Activated T-helper 1 cell treated with anti-CD3 and anti-CD28 coated beads, Interleukin-12 subunit alpha, Interleukin-12 subunit beta, Interleukin-2, Interleukin-4 antibody, amounts not matched to agents 30 ng/mL and 10 ng/mL and 1 ng/mL, durations not matched to agents 14 hours and 24 hours and 36 hours (primary cell): ENCODE measurements at regions of chr14 and their contacts with region 1.

Region 1: DNA sequence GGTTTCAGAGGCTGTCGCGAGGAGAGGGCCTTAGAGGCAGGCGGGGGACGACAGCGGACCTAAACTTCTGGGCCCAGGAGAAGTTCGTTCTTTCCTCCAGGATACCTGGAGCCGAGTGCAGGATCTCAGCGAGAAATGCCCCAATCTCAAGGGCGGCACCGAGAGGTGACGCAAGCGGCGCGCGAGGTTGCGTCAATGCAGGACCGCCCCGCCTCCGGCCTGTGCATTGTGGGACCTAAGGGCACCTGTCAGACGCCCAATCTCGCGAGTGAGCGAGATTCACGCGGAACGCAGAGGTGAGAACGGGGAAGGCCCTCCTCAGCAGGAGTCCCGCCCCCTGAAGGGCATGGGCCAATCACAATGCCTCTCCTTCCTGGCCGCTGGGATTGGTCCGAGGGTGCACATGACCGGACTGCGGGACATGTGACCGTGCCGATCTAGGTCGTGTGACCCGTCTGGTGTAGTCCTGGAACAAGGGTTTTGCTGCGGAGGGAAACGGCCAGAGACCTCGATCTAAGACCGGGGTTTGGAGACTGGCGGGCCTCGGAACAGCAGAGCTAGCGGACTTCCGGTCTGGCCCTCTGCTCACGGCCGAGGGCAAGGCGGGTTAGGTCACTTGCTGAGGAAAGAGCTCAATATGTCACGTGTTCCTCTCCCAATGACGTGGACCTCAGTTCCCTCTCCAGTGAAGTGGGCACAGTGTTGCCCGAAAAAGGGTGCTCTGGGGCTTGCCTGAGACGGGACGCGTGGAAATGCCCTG is 16.3 kb upstream of the DYNC1H1 start:
- DNase-seq: peak; percentile 100
- H3K4me3 Mint-ChIP-seq: peak overlapping the region; percentile 97
- H3K27ac Mint-ChIP-seq: peak overlapping the region; percentile 97
- H3K4me1 Mint-ChIP-seq: peaks cover 12% of the 10 kb centered on the region
- H3K27me3 Mint-ChIP-seq: peaks cover 15% of the 10 kb centered on the region

Region 2: GRCh38 chr14:101721951-101722661 is 226.0 kb before region 1 on chr14:
- intact Hi-C with region 1: loop called (anchors 1 kb)
- DNase-seq: peak; percentile 65
- H3K4me3 Mint-ChIP-seq: peak overlapping the region; percentile 77
- H3K27ac Mint-ChIP-seq: peak overlapping the region; percentile 94
- H3K4me1 Mint-ChIP-seq: peaks cover 46% of the 10 kb centered on the region
- H3K27me3 Mint-ChIP-seq: no peaks in the 10 kb centered on the region

Region 3: DNA sequence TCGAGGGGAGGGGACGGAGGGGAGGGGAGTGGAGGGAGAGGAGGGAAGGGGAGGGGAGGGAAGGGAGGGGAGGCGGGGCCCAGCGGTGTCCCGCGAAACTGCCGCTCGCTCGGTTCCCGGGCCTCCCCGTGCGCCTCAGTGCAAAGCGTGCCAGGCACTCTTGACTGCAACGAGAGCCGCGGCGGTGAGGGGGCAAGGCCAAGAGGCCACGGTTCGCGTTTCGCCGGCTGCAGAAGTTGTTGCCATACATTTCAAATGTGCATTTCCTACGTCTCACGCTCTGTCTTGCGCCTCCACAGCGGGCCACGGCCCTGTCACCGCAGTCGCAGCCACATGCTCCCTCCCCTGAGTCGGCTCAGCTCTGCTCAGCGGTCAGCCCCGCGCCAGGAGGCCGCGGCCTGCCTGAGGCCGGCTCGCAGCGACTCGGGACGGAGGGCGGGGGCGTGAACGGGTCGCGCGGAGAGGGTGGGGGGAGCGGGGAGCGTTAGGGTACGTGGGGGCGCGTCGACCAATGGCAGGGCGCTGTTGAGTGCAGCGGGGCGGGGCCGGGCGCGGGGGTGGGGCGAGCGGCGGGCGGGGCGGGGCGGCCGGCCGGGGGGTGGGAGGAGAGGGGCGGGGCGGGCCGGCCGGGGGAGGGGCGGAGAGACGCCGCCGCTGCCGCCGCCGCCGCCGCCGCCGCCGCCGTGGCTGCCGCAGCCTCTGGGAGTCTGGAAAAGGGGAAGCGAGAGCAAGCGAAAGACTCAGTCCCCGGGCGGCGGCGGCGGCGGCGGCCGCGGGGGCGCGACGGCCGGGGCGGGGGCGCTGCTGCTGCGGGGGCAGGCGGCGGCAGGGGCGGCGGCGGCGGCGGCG is 186.8 kb before region 1 on chr14 and contains the start of gene PPP2R5C:
- intact Hi-C with region 1: loop called (anchors 1 kb)
- DNase-seq: peak; percentile 72
- H3K4me3 Mint-ChIP-seq: peak within 1 kb of the TSS; percentile 90
- H3K27ac Mint-ChIP-seq: peak within 1 kb of the TSS; percentile 79
- H3K4me1 Mint-ChIP-seq: peaks cover 33% of the 10 kb centered on the region
- H3K27me3 Mint-ChIP-seq: peaks cover 3% of the 10 kb centered on the region
- total RNA-seq, gene PPP2R5C: 157 and 166 TPM in 2 replicates

Region 4: DNA sequence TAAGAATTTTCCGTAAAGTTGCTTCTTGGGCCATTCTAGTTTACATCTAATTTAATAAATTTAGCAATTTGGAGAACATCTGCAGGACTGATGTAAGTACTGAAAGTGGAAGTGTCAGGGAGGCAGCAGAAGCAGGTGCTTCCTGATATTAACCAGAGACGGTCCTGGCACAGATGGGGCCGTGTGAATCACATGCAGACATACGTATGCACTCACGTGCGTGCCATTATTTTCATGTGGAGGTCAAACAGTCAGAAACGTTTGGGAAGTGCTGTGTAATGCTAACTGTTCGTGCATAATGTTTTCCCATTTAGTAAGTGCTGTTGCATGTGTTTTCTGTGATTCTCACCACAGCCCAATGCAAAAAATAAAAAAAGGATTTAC is 71.5 kb before region 1 on chr14:
- intact Hi-C with region 1: loop called (anchors 2 kb)
- DNase-seq: peak; percentile 46
- H3K4me3 Mint-ChIP-seq: peak overlapping the region; percentile 65
- H3K27ac Mint-ChIP-seq: peak overlapping the region; percentile 81
- H3K4me1 Mint-ChIP-seq: peaks cover 80% of the 10 kb centered on the region
- H3K27me3 Mint-ChIP-seq: no peaks in the 10 kb centered on the region

Region 5: DNA sequence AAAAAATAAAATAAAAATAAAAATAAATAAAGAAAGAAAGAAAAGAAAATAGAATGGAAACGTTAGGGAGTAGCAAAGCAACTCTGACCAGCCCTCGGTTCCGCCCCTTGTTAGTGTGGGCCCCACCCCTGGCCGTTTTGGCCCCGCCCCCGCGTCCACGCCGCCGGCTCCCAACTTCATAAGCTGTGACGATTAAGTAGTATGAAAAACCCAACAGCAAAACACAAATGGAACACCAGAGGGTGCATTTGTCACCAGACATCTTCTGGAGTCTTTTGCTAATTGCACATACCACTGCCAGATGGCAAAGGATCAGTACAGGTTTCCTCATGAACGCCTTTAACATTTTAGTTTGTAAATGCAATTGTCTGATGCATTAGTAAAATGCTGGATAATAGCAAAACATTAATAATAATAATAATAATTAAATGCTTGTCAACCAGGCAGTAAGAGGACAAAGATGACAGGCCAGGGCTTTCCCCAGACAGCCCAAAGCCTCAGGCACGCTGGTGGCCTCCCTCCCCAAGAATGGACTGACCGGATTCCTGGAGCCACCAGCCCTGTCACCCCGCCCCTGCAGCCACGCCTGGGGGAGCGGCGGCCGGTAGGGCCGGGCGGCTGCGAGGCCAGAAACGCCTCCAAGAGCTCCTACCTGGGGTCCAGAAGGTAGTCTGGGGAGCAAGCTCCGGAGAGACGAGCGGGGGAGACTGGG is 115.2 kb after region 1 on chr14:
- intact Hi-C with region 1: no loop called
- DNase-seq: peak; percentile 48
- H3K4me3 Mint-ChIP-seq: no peak overlapping the region
- H3K27ac Mint-ChIP-seq: no peak overlapping the region
- H3K4me1 Mint-ChIP-seq: no peaks in the 10 kb centered on the region
- H3K27me3 Mint-ChIP-seq: peaks cover 3% of the 10 kb centered on the region

Region 6: DNA sequence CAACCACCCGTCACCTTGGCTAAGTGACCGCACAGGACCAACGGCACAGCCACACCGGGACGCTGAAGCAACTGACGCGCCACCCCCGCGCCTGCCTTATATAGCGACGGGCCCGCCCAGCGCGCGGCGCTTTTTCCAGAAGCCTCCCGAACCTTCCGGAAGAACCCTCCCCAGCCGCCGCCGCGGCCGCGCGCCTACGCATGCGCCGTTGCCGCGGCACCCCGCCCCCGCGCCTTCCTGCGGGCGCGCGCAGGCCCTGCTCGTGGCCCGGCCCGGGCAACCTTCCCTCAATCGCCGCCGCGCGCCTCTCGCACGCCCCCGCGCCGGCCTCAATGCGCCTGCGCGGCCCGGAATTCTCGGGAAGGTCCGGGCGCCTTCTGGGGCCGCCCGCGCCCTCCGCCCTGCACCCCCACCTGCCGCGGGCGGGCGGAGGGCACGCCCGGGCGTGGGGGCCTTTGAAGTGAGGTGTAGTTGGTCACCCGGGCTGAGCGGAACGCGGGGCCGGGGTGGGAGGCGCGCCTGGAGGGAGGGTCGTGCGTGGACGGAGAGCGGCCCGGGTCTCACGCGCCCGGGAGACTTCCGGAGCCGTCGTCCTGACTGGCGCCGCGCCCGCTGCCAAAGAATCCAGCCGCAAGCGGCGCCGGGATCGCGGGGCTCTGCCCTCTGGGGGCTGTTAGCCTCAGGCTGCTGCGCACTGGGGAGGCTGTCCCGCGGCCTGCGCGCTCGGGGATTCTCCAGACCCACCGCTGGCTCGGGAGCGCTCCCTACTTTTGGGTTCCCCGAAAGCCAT is 139.1 kb after region 1 on chr14 and contains the start of gene HSP90AA1:
- intact Hi-C with region 1: loop called (anchors 1 kb)
- DNase-seq: peak; percentile 94
- H3K4me3 Mint-ChIP-seq: peak within 1 kb of the TSS; percentile 99
- H3K27ac Mint-ChIP-seq: peak within 1 kb of the TSS; percentile 97
- H3K4me1 Mint-ChIP-seq: peaks cover 63% of the 10 kb centered on the region
- H3K27me3 Mint-ChIP-seq: no peaks in the 10 kb centered on the region
- total RNA-seq, gene HSP90AA1: 993 and 995 TPM in 2 replicates

Region 7: DNA sequence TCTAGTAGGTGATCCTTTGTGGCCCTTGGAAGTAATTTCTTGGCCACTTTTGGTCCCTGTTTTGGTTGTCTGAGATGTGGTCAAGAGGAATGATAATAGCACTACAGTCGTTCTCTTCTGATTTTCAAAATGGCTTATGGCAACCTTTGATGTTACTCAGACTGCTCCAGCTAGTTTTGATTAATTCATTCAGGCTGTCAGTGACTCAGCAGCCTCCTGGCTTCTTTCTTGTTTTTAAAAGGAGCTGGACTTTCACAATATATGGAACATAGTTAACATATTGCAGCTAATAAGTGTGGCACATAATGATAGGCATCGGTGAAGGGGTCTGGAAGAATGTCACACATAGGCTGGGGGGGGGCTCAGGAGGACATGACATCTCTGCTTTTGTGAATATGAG is 239.0 kb after region 1 on chr14:
- intact Hi-C with region 1: no loop called
- DNase-seq: no peak
- H3K4me3 Mint-ChIP-seq: no peak overlapping the region
- H3K27ac Mint-ChIP-seq: peak overlapping the region; percentile 61
- H3K4me1 Mint-ChIP-seq: peaks cover 37% of the 10 kb centered on the region
- H3K27me3 Mint-ChIP-seq: no peaks in the 10 kb centered on the region

Region 8: GRCh38 chr14:102304611-102305509 is 356.8 kb after region 1 on chr14 and contains the start of gene MOK:
- intact Hi-C with region 1: loop called (anchors 1 kb)
- DNase-seq: peak; percentile 98
- H3K4me3 Mint-ChIP-seq: peak within 1 kb of the TSS; percentile 96
- H3K27ac Mint-ChIP-seq: peak within 1 kb of the TSS; percentile 87
- H3K4me1 Mint-ChIP-seq: peaks cover 12% of the 10 kb centered on the region
- H3K27me3 Mint-ChIP-seq: peaks cover 10% of the 10 kb centered on the region
- total RNA-seq, gene MOK: 6.0 and 7.0 TPM in 2 replicates

Region 9: DNA sequence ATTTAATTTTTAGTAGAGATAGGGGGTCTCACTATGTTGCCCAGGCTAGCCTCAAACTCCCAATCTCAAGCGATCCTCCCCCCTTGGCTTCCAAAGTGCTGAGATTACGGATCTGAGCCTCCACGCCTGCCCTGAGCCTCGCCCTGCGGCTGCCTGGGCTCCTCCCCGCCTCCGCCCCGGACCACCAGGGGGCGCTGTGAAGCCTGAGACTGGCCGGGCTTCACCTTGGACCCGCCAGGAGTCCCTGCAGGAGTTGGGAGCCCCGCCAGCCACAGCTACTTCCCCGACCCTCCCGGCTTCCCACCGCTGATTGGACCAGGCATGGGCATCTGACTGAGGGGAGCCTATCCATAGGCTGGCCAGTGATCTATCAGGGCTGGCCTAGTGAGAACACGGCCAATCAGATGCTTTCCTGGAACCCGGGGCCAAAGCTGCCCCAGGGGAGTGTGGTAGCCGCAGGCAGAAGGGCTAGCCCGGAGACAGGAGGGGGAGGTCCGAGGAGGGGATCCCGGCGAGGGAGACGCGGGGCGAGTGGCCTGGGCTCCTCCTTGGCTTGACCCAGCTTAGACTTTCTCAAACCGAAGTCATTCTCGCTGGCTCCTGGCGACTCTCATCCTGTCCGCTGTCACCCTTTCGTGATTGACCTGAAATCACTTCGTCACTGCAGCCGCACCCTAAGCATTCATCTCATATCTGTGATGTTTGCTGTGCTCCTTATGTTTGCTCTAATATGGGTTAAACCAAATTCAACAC is 576.6 kb after region 1 on chr14:
- intact Hi-C with region 1: loop called (anchors 1 kb)
- DNase-seq: peak; percentile 94
- H3K4me3 Mint-ChIP-seq: peak overlapping the region; percentile 92
- H3K27ac Mint-ChIP-seq: peak overlapping the region; percentile 88
- H3K4me1 Mint-ChIP-seq: peaks cover 27% of the 10 kb centered on the region
- H3K27me3 Mint-ChIP-seq: peaks cover 7% of the 10 kb centered on the region